ENCODE measurements at regions of chr2 and their contacts with region 1.

Region 1: DNA sequence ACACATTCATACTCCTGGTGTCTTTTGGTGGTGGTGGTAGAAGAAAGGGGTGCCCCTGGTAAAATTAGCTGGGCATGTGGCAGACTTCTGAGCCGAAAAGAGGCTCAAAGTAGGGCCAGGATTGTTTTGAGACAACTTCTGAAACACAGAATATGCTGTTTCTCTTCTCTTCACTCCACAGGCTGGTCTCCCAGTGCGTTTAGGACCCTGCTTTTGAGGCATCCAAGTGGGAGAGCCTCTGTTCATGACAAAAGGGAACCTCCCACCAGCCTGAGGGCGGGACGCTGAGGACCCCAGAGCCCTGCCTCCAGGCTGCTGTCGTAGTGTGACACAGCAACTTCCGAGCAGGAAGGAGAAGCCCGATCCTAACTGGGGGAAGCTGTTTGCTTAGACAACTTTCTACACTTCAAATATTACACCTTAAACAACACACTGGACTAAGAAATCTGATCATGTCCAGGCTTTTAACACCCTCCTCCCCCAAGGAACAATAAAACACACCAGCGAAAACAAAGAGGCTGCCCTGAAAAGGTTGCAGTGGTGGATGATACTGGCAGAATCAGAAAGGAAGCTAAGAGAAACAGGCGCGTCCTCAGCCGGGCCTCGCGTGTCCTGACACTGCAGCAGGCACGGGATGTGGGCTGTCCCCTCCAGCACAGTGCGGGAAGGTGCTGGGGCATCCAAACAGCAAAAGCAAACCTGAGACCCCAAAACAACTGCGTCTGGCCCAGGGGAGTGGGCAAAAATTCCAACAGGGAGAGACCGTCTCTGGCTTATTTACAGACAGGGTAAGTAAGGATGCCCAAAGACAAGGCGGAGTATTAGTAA is 9.3 kb downstream of the SERTAD2 start:
- DNase-seq: peak in 4 of 5 donors; percentile 24 to 71 (median 59)
- H3K4me3 ChIP-seq: peak overlapping the region; percentile 63
- H3K4me3 Mint-ChIP-seq: peak overlapping the region; percentile 80 to 94 (median 89)
- H3K27ac ChIP-seq: peak overlapping the region; percentile 81
- H3K27ac Mint-ChIP-seq: peak overlapping the region; percentile 41 to 97 (median 86)
- H3K4me1 ChIP-seq: peaks cover 77% of the 10 kb centered on the region
- H3K4me1 Mint-ChIP-seq: peaks cover 69 to 97% (median 88%) of the 10 kb centered on the region in 3 donors
- H3K27me3 ChIP-seq: no peaks in the 10 kb centered on the region
- H3K27me3 Mint-ChIP-seq: peaks cover 0 to 2% of the 10 kb centered on the region in 2 donors

Region 2: GRCh38 chr2:64586883-64587481 is 57.4 kb before region 1 on chr2:
- CTCF ChIA-PET with region 1: interaction called, 11 read pairs
- POLR2A ChIA-PET with region 1: no interaction called
- DNase-seq: peak in 2 of 5 donors; percentile 23 to 36
- H3K4me3 ChIP-seq: no peak overlapping the region
- H3K4me3 Mint-ChIP-seq: no peak overlapping the region
- H3K27ac ChIP-seq: no peak overlapping the region
- H3K27ac Mint-ChIP-seq: peak overlapping the region in 2 of 8 donors; percentile 2 to 3
- H3K4me1 ChIP-seq: no peaks in the 10 kb centered on the region
- H3K4me1 Mint-ChIP-seq: peaks cover 0 to 4% (median 0%) of the 10 kb centered on the region in 3 donors
- H3K27me3 ChIP-seq: no peaks in the 10 kb centered on the region
- H3K27me3 Mint-ChIP-seq: no peaks in the 10 kb centered on the region

Region 3: DNA sequence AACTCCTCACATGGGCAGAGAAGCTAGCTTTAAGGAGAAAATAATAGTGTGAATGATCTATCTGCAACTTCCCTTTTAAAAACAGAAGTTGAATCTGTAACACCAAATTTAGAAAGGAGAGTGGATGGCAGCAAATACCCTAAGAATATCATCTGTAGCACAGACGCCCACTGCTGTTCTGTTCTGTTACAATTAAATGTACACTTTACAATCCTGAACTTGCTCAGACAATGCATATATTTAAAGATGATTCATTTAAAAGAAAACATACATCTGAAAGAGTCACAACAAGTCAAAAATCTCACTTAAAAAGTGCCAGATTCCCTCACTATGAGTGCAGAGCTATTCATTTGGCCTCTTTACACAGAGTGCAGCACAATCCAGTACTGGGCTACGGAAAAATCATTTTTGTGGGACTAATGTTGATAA is 17.4 kb after region 1 on chr2:
- CTCF ChIA-PET with region 1: interaction called, 81 read pairs
- POLR2A ChIA-PET with region 1: interaction called, 4 read pairs
- DNase-seq: no peak
- H3K4me3 ChIP-seq: no peak overlapping the region
- H3K4me3 Mint-ChIP-seq: no peak overlapping the region
- H3K27ac ChIP-seq: no peak overlapping the region
- H3K27ac Mint-ChIP-seq: no peak overlapping the region
- H3K4me1 ChIP-seq: peaks cover 27% of the 10 kb centered on the region
- H3K4me1 Mint-ChIP-seq: peaks cover 8 to 35% (median 15%) of the 10 kb centered on the region in 3 donors
- H3K27me3 ChIP-seq: no peaks in the 10 kb centered on the region
- H3K27me3 Mint-ChIP-seq: no peaks in the 10 kb centered on the region

Region 4: GRCh38 chr2:64750817-64751285 is 106.5 kb after region 1 on chr2:
- CTCF ChIA-PET with region 1: interaction called, 28 read pairs
- POLR2A ChIA-PET with region 1: interaction called, 22 read pairs
- DNase-seq: peak in 3 of 5 donors; percentile 96 to 99 (median 98)
- H3K4me3 ChIP-seq: peak overlapping the region; percentile 96
- H3K4me3 Mint-ChIP-seq: peak overlapping the region; percentile 90 to 100 (median 99)
- H3K27ac ChIP-seq: peak overlapping the region; percentile 90
- H3K27ac Mint-ChIP-seq: peak overlapping the region; percentile 93 to 99 (median 98)
- H3K4me1 ChIP-seq: peaks cover 17% of the 10 kb centered on the region
- H3K4me1 Mint-ChIP-seq: peaks cover 22 to 35% (median 27%) of the 10 kb centered on the region in 3 donors
- H3K27me3 ChIP-seq: no peaks in the 10 kb centered on the region
- H3K27me3 Mint-ChIP-seq: peaks cover 0 to 2% of the 10 kb centered on the region in 2 donors

Region 5: GRCh38 chr2:64831134-64831976 is 187.0 kb after region 1 on chr2:
- CTCF ChIA-PET with region 1: interaction called, 67 read pairs
- POLR2A ChIA-PET with region 1: no interaction called
- DNase-seq: peak; percentile 71 to 87 (median 74)
- H3K4me3 ChIP-seq: peak overlapping the region; percentile 33
- H3K4me3 Mint-ChIP-seq: peak overlapping the region; percentile 32 to 86 (median 67)
- H3K27ac ChIP-seq: no peak overlapping the region
- H3K27ac Mint-ChIP-seq: peak overlapping the region in 7 of 8 donors; percentile 6 to 97 (median 61)
- H3K4me1 ChIP-seq: peaks cover 10% of the 10 kb centered on the region
- H3K4me1 Mint-ChIP-seq: peaks cover 11 to 12% (median 11%) of the 10 kb centered on the region in 3 donors
- H3K27me3 ChIP-seq: no peaks in the 10 kb centered on the region
- H3K27me3 Mint-ChIP-seq: peaks cover 1 to 4% of the 10 kb centered on the region in 2 donors

Region 6: DNA sequence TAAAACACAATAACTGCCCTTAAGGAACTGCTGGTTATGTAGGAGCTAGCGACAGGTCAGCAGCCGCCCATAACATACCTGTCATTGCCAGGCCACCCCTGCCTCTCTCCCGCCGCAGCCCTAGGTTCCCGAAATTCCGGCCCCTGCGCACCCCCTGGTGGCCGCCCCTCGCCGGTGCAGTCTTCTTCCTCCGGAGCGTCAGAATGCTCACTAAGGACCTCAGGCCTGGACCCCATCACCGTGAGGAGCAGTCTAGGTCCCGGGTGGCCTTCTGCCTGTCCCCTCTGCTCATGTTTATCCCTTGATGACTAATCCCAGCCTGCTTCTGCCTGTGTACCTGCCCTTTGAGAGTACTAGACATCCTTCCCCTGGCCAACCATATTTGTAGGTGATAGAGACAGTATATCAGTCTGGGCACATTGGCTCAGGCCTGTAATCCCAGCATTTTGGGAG is 229.1 kb after region 1 on chr2:
- CTCF ChIA-PET with region 1: interaction called, 20 read pairs
- POLR2A ChIA-PET with region 1: no interaction called
- DNase-seq: peak; percentile 63 to 79 (median 69)
- H3K4me3 ChIP-seq: no peak overlapping the region
- H3K4me3 Mint-ChIP-seq: peak overlapping the region in 3 of 7 donors; percentile 57 to 75 (median 61)
- H3K27ac ChIP-seq: no peak overlapping the region
- H3K27ac Mint-ChIP-seq: peak overlapping the region in 3 of 8 donors; percentile 1 to 83 (median 60)
- H3K4me1 ChIP-seq: peaks cover 7% of the 10 kb centered on the region
- H3K4me1 Mint-ChIP-seq: peaks cover 6 to 8% (median 7%) of the 10 kb centered on the region in 3 donors
- H3K27me3 ChIP-seq: no peaks in the 10 kb centered on the region
- H3K27me3 Mint-ChIP-seq: peaks cover 6% of the 10 kb centered on the region in 2 donors